Common myeloid progenitor, CD34-positive (primary cell): ENCODE measurements at regions of chr2 and their contacts with region 1.

Region 1: DNA sequence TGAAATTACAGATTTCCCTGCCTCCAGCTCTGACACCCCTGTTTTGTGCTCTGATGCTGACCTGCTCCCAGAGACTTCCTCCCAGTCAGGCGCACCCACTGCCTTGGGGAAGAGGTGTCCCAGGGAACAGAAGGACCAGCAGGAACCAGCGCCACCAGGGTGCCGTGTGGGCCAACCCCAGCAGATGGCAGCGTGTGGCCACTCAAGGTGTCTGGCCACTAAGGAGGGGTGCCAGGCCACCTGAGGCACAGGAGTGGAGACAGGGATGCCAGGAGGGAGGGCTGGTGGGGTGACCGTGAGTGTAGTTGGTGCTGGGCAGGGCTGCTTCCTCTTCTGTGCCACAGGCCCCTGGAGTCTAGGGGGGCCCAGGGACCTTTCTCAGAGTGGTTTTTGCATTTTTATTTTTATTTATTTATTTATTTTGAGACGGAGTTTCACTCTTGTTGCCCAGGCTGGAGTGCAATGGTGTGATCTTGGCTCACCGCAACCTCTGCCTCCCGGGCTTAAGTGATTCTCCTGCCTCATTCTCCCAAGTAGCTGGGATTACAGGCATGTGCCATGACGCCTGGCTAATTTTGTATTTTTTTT is 56.0 kb downstream of the TEX44 start:
- DNase-seq: peak; percentile 55 to 79 (median 76)
- H3K4me3 ChIP-seq: no peak overlapping the region
- H3K27ac ChIP-seq: no peak overlapping the region
- H3K4me1 ChIP-seq: peaks cover 0 to 31% (median 12%) of the 10 kb centered on the region in 4 experiments
- H3K27me3 ChIP-seq: no peaks in the 10 kb centered on the region

Region 2: GRCh38 chr2:231632559-231633142 is 16.0 kb before region 1 on chr2:
- CTCF ChIA-PET with region 1: no interaction called
- POLR2A ChIA-PET with region 1: no interaction called
- DNase-seq: no peak
- H3K4me3 ChIP-seq: no peak overlapping the region
- H3K27ac ChIP-seq: no peak overlapping the region
- H3K4me1 ChIP-seq: peaks cover 0 to 11% (median 0%) of the 10 kb centered on the region in 4 experiments
- H3K27me3 ChIP-seq: no peaks in the 10 kb centered on the region

Region 3: GRCh38 chr2:231662028-231662810 is 13.5 kb after region 1 on chr2:
- CTCF ChIA-PET with region 1: interaction called, 25 read pairs
- POLR2A ChIA-PET with region 1: interaction called, 4 read pairs
- DNase-seq: peak; percentile 96 to 98 (median 98)
- H3K4me3 ChIP-seq: peak overlapping the region; percentile 13 to 75 (median 51)
- H3K27ac ChIP-seq: peak overlapping the region in 1 of 2 experiments; percentile 81
- H3K4me1 ChIP-seq: peaks cover 5 to 55% (median 47%) of the 10 kb centered on the region in 4 experiments
- H3K27me3 ChIP-seq: no peaks in the 10 kb centered on the region

Region 4: DNA sequence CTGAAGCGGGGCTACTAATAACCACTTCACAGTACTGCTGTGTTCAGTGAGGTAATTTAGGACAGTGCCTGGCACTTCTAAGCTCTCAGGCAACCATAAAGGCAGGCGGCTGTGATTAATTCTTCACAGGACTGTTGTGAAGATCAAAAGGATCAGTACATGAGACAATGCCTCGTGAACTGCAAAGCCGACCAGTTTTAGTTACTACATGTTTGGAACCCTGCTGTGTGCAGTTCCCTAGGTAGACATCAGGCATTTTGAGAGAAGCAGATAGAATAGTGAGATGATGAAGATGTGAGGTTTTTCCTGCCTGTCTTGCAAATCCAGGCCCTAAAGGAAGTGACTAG is 1003.8 kb after region 1 on chr2:
- CTCF ChIA-PET with region 1: no interaction called
- POLR2A ChIA-PET with region 1: no interaction called
- DNase-seq: no peak
- H3K4me3 ChIP-seq: no peak overlapping the region
- H3K27ac ChIP-seq: no peak overlapping the region
- H3K4me1 ChIP-seq: no peaks in the 10 kb centered on the region
- H3K27me3 ChIP-seq: no peaks in the 10 kb centered on the region